Psoas muscle (tissue), 8 donors: ENCODE measurements at regions of chr14 and their contacts with region 1.

Region 1: DNA sequence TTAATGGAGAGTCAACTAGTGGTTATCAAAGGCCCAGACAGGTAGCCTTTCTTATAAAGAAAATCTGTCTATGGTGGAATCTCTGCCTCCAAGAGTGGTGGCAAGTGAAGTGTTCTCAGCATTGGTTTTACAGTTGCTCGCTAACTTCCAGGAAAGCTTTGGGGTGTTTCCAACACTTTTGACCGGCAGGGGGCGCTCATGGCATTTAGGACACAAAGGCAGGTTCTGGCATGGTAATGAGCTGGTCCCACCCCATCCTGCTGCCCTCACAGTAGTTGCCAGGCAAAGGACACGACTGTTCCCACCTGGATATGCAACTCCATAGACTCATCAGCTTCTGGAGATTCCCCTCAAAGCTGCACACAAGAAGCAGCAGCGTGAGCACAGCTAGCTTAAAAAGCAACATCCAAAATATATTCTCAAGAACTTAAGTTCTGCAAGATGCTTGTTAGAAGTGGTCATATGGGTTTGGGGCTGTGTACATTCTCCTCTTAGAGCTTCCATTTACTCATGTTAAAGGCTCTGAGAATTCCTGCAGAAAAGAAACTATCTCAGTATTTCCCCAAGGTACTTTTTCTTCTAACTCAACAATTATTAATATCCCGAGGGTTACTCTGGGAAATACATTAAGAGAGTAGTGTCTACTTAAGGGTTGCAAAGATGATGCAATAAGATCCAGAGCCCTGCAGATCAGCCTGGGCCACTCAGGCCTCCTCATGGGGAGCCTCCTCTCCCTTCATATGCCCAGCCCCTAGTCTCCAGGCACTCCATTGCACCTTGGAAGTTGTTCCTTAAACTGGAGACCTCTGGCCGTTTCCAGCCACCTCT is 14.8 kb downstream of the PROX2 start:
- DNase-seq: peak; percentile 90 to 94
- ATAC-seq: peak; percentile 63 to 81 (median 71)
- H3K4me3 ChIP-seq: no peak overlapping the region
- H3K27ac ChIP-seq: no peak overlapping the region
- H3K4me1 ChIP-seq: peaks cover 8% of the 10 kb centered on the region
- H3K27me3 ChIP-seq: no peaks in the 10 kb centered on the region
- CTCF ChIP-seq: peak; percentile 86

Region 2: DNA sequence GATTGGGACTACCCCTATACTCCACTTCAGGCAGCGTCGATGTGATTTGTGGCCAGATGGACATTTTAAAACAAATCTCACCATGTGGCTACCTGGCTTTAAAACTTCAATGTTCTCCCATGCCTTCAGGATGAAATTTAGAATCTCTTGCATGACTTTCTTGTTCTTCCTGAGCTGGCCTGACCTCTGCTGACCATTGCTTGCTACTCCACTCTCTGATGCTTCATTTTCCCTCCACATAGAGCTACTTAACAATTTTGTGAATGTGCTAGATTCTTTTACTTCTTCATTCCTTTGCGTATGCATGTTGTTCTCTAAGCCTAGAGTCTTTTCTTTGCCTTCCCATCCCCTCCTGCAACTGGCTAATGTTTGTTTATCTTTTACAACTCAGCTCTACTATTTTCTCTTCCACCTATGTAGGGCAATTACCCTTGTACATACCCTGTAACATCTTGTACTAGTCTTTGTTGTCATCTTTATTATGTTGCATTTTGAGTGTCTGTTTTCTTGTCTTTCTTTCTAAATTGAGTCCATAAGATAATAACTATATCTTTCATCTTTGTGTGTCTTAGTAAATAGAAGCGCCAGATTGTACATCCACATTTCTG is 56.8 kb before region 1 on chr14:
- intact Hi-C with region 1: no loop called
- DNase-seq: no peak
- ATAC-seq: peak in 2 of 4 donors; percentile 38 to 79
- H3K4me3 ChIP-seq: no peak overlapping the region
- H3K27ac ChIP-seq: no peak overlapping the region
- H3K4me1 ChIP-seq: no peaks in the 10 kb centered on the region
- H3K27me3 ChIP-seq: no peaks in the 10 kb centered on the region
- CTCF ChIP-seq: peak; percentile 59

Region 3: GRCh38 chr14:74893614-74894091 is 32.5 kb after region 1 on chr14:
- intact Hi-C with region 1: no loop called
- DNase-seq: no peak
- ATAC-seq: no peak
- H3K4me3 ChIP-seq: no peak overlapping the region
- H3K27ac ChIP-seq: no peak overlapping the region
- H3K4me1 ChIP-seq: peaks cover 2% of the 10 kb centered on the region
- H3K27me3 ChIP-seq: no peaks in the 10 kb centered on the region
- CTCF ChIP-seq: no peak

Region 4: DNA sequence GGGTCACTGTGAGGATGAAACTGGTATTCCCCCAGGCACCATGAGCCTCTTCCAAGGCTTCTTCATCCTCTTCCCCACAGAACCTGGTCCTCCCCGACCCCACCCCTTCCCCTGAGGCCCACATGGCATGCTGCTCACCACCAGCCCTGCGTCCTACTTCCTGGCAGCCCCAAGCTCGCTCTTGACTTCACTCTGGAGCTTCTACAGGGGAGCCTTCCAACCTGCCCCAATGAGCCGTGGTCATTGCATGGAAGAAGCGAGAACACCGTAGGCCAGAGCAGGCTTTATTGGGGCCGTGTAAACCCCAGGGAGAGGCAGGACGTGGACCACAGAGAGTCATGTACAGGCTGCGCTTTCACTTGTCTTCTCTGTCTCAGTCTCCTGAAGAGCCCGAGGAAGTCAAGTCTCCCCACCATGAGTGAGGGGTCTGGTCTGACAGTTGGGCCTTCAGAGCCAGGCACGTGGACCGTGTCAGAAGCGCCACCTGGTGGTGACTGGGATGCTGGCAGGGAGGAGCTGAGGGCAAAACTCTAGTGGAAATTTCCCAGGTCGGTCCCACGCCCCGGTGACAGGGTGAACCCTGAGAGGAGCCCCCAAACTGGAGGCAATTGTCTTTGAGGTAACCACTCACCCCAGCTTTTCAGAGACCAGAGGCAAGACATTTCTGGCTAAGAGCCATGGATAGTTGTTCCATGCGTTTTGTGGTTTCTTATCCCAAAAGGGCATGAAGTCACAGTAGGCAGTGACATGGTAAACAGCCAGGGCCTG is 44.4 kb after region 1 on chr14:
- intact Hi-C with region 1: loop called (anchors 1 to 5 kb)
- DNase-seq: peak; percentile 80 to 89
- ATAC-seq: peak; percentile 55 to 75 (median 58)
- H3K4me3 ChIP-seq: no peak overlapping the region
- H3K27ac ChIP-seq: no peak overlapping the region
- H3K4me1 ChIP-seq: peaks cover 15% of the 10 kb centered on the region
- H3K27me3 ChIP-seq: no peaks in the 10 kb centered on the region
- CTCF ChIP-seq: peak; percentile 92